Activated T-helper 2 cell treated with anti-CD3 and anti-CD28 coated beads, Interferon-gamma antibody, Interleukin-2, Interleukin-4, amounts not matched to agents 10 μg/mL and 5 μg/mL and 100 μg/mL, durations not matched to agents 14 hours and 24 hours and 36 hours (primary cell): ENCODE measurements at regions of chr9 and their contacts with region 1.

Region 1: GRCh38 chr9:35790385-35791296 is 750 bp upstream of the NPR2 start:
- DNase-seq: peak; percentile 43
- H3K4me3 Mint-ChIP-seq: no peak overlapping the region
- H3K27ac Mint-ChIP-seq: no peak overlapping the region
- H3K4me1 Mint-ChIP-seq: peaks cover 11% of the 10 kb centered on the region
- H3K27me3 Mint-ChIP-seq: no peaks in the 10 kb centered on the region

Region 2: GRCh38 chr9:35882263-35882848 is 91.7 kb after region 1 on chr9:
- intact Hi-C with region 1: loop called (anchors 1 kb)
- DNase-seq: peak; percentile 55
- H3K4me3 Mint-ChIP-seq: no peak overlapping the region
- H3K27ac Mint-ChIP-seq: no peak overlapping the region
- H3K4me1 Mint-ChIP-seq: no peaks in the 10 kb centered on the region
- H3K27me3 Mint-ChIP-seq: peaks cover 33% of the 10 kb centered on the region